ENCODE measurements at regions of chr10 and their contacts with region 1.

Region 1: DNA sequence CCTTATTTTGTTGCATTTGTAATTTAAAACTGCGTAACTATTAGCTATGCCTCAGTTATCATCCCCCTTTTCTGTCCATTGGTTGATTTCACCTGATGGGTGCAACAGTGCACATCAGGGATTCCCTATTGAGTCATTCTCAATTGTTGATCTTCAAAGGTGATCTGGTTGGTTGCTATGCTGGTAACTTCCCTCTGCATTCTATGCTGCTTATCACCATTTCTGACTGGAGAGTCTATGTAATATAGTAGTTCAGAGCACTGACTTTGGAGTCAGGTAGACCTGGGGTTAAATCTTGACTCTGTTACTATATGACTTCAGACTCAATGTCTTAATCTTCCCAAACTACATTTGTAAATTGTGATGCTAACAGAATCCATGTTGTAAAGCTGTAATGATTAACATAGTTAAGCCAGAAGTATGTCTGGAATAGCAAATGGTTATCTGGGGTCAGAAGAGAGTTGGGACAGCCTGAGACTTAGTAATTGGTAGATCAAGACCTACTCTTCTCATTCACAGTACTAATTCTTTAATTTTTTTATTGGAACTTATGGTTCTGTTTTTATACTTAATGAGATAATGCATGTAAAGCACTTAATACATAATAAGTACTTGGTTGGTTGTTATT is 38.1 kb downstream of the EXOC6 start:
- DNase-seq: no peak
- H3K4me3 ChIP-seq: no peak overlapping the region
- CTCF ChIP-seq: no peak

Region 2: DNA sequence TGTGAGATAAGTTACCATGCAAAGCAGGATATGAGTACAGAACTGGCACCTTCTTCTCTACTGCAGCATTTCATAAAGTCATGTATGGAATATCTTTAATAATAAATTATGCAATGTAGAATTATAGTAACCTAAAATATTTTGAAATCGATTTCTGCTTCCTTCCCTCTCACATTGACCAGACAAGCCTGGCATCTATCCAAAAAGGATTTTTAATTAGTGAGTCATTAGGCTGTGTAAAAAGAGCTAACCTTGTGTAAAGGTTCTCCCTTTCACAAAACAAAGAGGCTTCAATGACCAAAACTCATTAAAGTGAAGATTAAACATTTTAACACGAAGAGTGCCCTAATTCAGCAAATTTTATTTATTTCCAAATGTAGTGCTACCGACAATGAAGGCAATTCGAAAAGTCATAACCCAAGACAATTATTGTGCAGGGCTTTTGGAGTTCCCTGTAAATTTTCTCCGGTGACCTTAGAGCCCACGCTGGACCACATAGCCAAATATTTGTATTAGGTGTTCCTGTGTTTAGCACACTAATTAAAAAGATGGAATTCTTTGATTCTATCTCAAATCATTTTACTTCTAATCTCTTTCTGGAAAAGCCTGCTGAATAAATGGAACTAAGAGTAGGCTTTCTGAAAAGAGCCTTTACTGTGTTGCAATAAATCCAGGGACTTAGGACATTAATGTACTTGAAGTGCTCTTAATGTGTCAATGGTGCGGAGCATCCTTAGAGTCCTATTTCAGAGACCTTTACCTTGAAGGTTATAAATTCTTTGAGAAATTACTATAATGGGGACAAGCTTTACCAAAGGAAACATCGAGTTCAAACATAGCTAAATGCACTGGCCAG is 86.6 kb before region 1 on chr10:
- CTCF ChIA-PET with region 1: no interaction called
- POLR2A ChIA-PET with region 1: no interaction called
- DNase-seq: no peak
- H3K4me3 ChIP-seq: no peak overlapping the region
- CTCF ChIP-seq: no peak

Region 3: GRCh38 chr10:92901819-92902251 is 15.4 kb after region 1 on chr10:
- CTCF ChIA-PET with region 1: interaction called, 18 read pairs
- POLR2A ChIA-PET with region 1: no interaction called
- DNase-seq: no peak
- H3K4me3 ChIP-seq: no peak overlapping the region
- CTCF ChIP-seq: no peak

Region 4: GRCh38 chr10:93030409-93030808 is 144.0 kb after region 1 on chr10:
- CTCF ChIA-PET with region 1: interaction called, 18 read pairs
- POLR2A ChIA-PET with region 1: no interaction called
- DNase-seq: peak; percentile 59
- H3K4me3 ChIP-seq: no peak overlapping the region
- CTCF ChIP-seq: no peak

Region 5: DNA sequence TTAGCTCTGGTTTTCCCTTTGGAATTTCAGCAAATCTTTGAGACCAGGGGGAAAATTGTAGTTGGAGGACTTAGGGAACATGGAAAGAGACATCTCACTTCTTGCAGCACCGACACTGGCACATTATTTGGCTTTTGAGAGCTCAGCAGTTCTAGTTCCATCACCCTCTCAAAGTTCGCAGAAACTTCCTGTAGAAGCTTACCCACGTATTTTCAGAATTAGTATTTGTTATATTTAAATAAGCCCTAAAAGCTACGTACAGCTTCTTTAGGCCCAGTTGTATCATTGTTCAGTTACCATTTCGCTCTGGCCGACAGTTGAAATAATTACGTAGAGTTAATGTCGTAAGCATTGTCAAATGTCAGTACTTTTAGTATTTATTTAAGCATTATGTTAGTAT is 623.4 kb after region 1 on chr10:
- CTCF ChIA-PET with region 1: interaction called, 51 read pairs
- POLR2A ChIA-PET with region 1: no interaction called
- DNase-seq: no peak
- H3K4me3 ChIP-seq: no peak overlapping the region
- CTCF ChIP-seq: no peak

Measured in AG04449 (cell line).